Activated CD4-positive, alpha-beta T cell treated with anti-CD3 and anti-CD28 coated beads, Interleukin-2, amount 10 ng/mL, durations not matched to agents 24 days and 14 days (primary cell): ENCODE measurements at regions of chr12 and their contacts with region 1.

Region 1: GRCh38 chr12:132083941-132084620 is 60.0 kb downstream of the DDX51 start:
- DNase-seq: peak; percentile 97
- H3K4me3 Mint-ChIP-seq: peak overlapping the region; percentile 98
- H3K27ac Mint-ChIP-seq: peak overlapping the region; percentile 98
- H3K4me1 Mint-ChIP-seq: peaks cover 22% of the 10 kb centered on the region
- H3K27me3 Mint-ChIP-seq: no peaks in the 10 kb centered on the region

Region 2: GRCh38 chr12:131912518-131913294 is 171.4 kb before region 1 on chr12:
- intact Hi-C with region 1: no loop called
- DNase-seq: no peak
- H3K4me3 Mint-ChIP-seq: no peak overlapping the region
- H3K27ac Mint-ChIP-seq: no peak overlapping the region
- H3K4me1 Mint-ChIP-seq: no peaks in the 10 kb centered on the region
- H3K27me3 Mint-ChIP-seq: no peaks in the 10 kb centered on the region

Region 3: DNA sequence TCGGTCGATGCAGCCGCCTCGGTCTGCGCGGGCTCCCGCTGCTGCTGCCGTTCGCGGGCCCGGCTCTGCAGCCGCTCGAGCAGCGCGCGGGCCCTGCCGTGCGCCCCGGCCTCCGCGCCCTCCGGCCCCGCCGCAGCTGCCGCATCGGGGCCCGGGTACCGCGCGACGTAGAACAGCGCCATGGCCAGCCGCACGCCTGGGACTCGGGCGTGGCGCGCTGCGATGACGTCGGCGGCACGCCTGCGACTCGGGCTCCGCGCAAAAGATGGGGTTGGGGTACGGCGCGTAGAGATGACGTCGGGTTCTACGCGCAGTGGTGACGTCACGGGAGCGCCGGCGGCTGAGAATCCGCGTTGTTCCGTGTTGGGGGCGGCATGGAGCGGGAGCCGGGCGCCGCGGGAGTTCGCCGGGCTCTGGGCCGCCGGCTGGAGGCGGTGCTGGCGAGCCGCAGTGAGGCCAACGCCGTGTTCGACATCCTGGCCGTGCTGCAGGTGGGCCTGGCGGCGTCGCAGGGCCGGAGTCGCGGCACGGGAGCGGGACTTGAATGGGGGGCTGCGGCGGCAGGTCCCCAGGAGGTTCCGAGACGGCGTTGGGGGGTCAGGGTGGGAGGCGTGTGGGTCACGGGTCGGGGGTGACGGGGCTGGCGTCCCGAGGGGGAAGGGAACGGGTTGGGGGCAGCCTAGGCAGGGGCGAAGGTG is 60.2 kb after region 1 on chr12 and contains the starts of genes DDX51 and NOC4L:
- intact Hi-C with region 1: loop called (anchors 1 kb)
- DNase-seq: peak; percentile 99
- H3K4me3 Mint-ChIP-seq: peak within 1 kb of the TSS; percentile 92
- H3K27ac Mint-ChIP-seq: peak within 1 kb of the TSS; percentile 97
- H3K4me1 Mint-ChIP-seq: peaks cover 21% of the 10 kb centered on the region
- H3K27me3 Mint-ChIP-seq: peaks cover 2% of the 10 kb centered on the region
- total RNA-seq, gene DDX51: 51.7 and 55.5 TPM in 2 replicates
- total RNA-seq, gene NOC4L: 49.6 and 53.3 TPM in 2 replicates

Region 4: GRCh38 chr12:132189378-132190011 is 105.4 kb after region 1 on chr12:
- intact Hi-C with region 1: no loop called
- DNase-seq: peak; percentile 98
- H3K4me3 Mint-ChIP-seq: peak overlapping the region; percentile 99
- H3K27ac Mint-ChIP-seq: peak overlapping the region; percentile 91
- H3K4me1 Mint-ChIP-seq: peaks cover 26% of the 10 kb centered on the region
- H3K27me3 Mint-ChIP-seq: peaks cover 2% of the 10 kb centered on the region

Region 5: DNA sequence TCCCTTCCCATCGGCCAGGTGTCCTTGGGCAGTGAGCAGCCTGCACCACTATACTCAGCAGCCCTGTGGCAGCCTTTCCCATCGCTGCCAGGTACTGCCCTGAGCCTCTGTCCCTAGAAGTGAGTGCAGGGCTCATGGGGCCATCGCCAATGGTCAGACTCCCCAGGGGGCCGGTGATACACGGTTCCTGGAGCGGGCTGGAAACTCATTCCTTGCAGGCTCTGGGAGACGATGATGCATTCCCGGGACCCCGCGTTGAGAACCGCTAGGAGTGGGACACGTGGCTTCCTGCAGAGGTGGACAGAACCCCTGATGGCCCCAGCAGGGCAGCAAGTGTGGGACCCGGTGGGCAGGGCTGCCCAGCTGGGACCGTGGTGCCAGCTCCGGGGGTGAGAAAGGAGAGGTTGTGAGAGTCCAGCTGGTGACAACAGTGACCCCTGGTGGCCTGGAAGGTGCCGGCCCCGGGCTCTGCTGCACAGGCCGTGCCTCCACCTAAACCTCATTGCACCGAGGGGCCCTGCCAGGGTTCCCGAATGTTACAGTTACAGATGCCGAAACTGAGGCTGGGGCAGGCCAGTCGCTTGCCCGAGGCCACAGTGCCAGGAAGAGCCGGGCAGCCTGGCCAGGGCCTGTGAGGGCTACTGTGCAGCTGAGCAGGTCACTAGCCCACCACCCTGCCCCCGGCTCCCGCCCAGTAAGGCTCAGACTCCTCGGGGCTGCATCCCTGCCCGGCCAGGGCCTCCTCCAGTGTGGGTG is 439.7 kb after region 1 on chr12:
- intact Hi-C with region 1: no loop called
- DNase-seq: peak; percentile 91
- H3K4me3 Mint-ChIP-seq: no peak overlapping the region
- H3K27ac Mint-ChIP-seq: no peak overlapping the region
- H3K4me1 Mint-ChIP-seq: no peaks in the 10 kb centered on the region
- H3K27me3 Mint-ChIP-seq: no peaks in the 10 kb centered on the region